ENCODE measurements at regions of chr6 and their contacts with region 1.

Region 1: GRCh38 chr6:20534295-20535262 is at the start of gene CDKAL1:
- DNase-seq: peak; percentile 86 to 96 (median 89)
- H3K4me3 ChIP-seq: peak within 1 kb of the TSS; percentile 46 to 89 (median 60)
- H3K27ac ChIP-seq: peak within 1 kb of the TSS in 4 of 5 donors; percentile 74 to 82 (median 76)
- H3K4me1 ChIP-seq: peaks cover 0 to 11% of the 10 kb centered on the region in 2 donors
- H3K27me3 ChIP-seq: no peaks in the 10 kb centered on the region
- CTCF ChIP-seq: no peak
- POLR2A ChIP-seq: peak in 1 of 2 donors; percentile 56
- total RNA-seq, gene CDKAL1: 8.5 to 21.1 (median 11.8) TPM

Region 2: GRCh38 chr6:20092071-20092566 is 442.5 kb before region 1 on chr6:
- intact Hi-C with region 1: loop called in 1 of 2 experiments (anchors 10 kb)
- DNase-seq: peak in 1 of 7 donors; percentile 4
- H3K4me3 ChIP-seq: no peak overlapping the region
- H3K27ac ChIP-seq: no peak overlapping the region
- H3K4me1 ChIP-seq: no peaks in the 10 kb centered on the region
- H3K27me3 ChIP-seq: no peaks in the 10 kb centered on the region
- CTCF ChIP-seq: peak; percentile 65 to 79 (median 74)
- POLR2A ChIP-seq: no peak

Region 3: DNA sequence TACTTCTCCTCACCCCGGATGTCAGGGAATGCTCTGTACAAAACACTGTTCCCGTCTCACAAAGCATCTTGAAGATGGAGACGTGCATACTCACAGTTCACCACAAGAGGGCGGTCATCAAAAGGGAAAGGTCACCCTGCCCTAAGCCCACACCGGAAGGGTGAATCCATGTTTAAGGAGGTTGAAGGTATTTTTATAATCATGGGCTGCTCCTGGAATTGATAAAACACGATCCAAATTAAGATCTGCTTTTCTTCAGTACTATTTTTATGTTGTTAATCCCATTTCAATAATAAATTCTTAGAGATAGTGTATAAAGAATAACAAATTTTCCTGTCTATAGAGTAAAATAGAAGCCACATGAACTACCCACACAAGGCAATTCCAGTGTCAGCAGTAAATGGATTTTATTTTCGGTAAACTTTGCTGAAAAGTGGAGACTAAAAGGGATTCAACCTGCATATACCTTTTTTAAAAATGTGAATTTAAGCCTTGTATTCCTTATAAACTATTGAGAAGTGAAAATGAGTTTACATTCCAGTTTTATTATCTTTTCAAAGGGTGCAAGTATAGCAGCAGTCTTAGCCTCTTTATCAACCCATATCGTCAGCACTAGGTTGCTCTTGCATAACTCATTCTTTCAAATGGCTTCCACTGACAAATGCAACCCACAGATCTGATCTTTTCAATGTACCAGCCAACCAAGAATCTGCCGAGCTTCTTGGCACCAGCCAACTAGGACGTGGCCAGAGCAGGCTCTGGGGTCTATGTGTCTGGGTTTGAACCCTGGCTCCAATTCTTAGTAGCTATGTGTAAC is 242.6 kb before region 1 on chr6:
- intact Hi-C with region 1: loop called (anchors 2 to 5 kb)
- DNase-seq: peak; percentile 61 to 90 (median 82)
- H3K4me3 ChIP-seq: no peak overlapping the region
- H3K27ac ChIP-seq: no peak overlapping the region
- H3K4me1 ChIP-seq: no peaks in the 10 kb centered on the region
- H3K27me3 ChIP-seq: no peaks in the 10 kb centered on the region
- CTCF ChIP-seq: peak; percentile 83 to 92 (median 90)
- POLR2A ChIP-seq: no peak

Region 4: GRCh38 chr6:20306491-20306890 is 228.1 kb before region 1 on chr6:
- intact Hi-C with region 1: loop called in 1 of 2 experiments (anchors 5 kb)
- DNase-seq: no peak
- H3K4me3 ChIP-seq: no peak overlapping the region
- H3K27ac ChIP-seq: no peak overlapping the region
- H3K4me1 ChIP-seq: peaks cover 0 to 4% of the 10 kb centered on the region in 2 donors
- H3K27me3 ChIP-seq: no peaks in the 10 kb centered on the region
- CTCF ChIP-seq: no peak
- POLR2A ChIP-seq: no peak

Region 5: GRCh38 chr6:20399518-20399917 is 135.1 kb before region 1 on chr6:
- intact Hi-C with region 1: loop called in 1 of 2 experiments (anchors 5 kb)
- DNase-seq: no peak
- H3K4me3 ChIP-seq: no peak overlapping the region
- H3K27ac ChIP-seq: no peak overlapping the region
- H3K4me1 ChIP-seq: no peaks in the 10 kb centered on the region
- H3K27me3 ChIP-seq: no peaks in the 10 kb centered on the region
- CTCF ChIP-seq: no peak
- POLR2A ChIP-seq: no peak

Region 6: DNA sequence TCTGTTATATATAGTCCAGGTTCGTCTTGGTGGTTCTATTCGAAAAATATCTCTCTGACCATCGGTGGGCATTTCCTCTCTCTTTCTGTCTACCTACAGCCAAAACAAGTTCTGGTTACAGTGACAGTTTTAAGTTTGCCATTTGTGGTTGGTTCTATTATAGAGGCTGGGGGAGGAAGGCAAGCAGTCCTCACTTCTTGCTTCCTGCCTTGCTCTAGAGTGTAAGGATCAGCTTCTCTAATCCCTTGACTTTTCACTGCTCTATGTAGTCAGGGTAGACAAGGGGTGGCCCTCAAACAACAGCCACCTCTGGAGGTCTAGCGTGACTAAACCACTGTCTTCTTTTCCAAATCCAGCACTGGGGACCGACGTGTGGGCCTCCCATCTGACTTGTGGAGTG is 116.8 kb before region 1 on chr6:
- intact Hi-C with region 1: loop called in 1 of 2 experiments (anchors 10 kb)
- DNase-seq: no peak
- H3K4me3 ChIP-seq: no peak overlapping the region
- H3K27ac ChIP-seq: no peak overlapping the region
- H3K4me1 ChIP-seq: peaks cover 0 to 5% of the 10 kb centered on the region in 2 donors
- H3K27me3 ChIP-seq: no peaks in the 10 kb centered on the region
- CTCF ChIP-seq: no peak
- POLR2A ChIP-seq: no peak

Region 7: GRCh38 chr6:20605581-20605980 is 71.0 kb after region 1 on chr6:
- intact Hi-C with region 1: no loop called
- DNase-seq: no peak
- H3K4me3 ChIP-seq: no peak overlapping the region
- H3K27ac ChIP-seq: no peak overlapping the region
- H3K4me1 ChIP-seq: no peaks in the 10 kb centered on the region
- H3K27me3 ChIP-seq: no peaks in the 10 kb centered on the region
- CTCF ChIP-seq: no peak
- POLR2A ChIP-seq: no peak

Region 8: DNA sequence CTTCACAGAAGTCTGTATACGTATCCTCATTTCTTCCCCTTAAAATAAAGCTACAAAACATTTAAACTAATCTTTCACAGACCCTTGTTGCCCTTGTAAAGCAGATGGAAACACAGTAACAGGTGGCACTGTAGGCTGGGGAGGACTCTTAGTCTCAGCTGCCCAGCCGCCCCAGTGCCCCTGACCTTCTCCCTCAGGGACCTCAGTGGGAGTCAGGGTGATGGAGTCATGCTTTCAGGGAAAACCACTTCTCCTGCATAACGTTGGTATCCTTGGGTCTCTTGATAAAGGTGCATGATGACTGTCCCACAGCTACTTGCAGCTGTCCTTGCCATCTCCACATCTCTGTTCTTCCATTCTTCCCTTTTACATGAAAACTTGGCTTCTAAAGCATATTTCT is 198.3 kb after region 1 on chr6:
- intact Hi-C with region 1: no loop called
- DNase-seq: no peak
- H3K4me3 ChIP-seq: no peak overlapping the region
- H3K27ac ChIP-seq: no peak overlapping the region
- H3K4me1 ChIP-seq: peaks cover 0 to 7% of the 10 kb centered on the region in 2 donors
- H3K27me3 ChIP-seq: no peaks in the 10 kb centered on the region
- CTCF ChIP-seq: no peak
- POLR2A ChIP-seq: no peak